GM12878 (cell line): ENCODE measurements at regions of chr6 and their contacts with region 1.

Region 1: GRCh38 chr6:1436334-1437306 is 47.2 kb downstream of the FOXF2 start:
- DNase-seq: peak; percentile 30
- ATAC-seq: peak; percentile 92
- H3K4me3 ChIP-seq: no peak overlapping the region
- H3K27ac ChIP-seq: no peak overlapping the region
- H3K4me1 ChIP-seq: no peaks in the 10 kb centered on the region
- H3K27me3 ChIP-seq: peaks cover 0 to 3% of the 10 kb centered on the region in 2 experiments; a peak in 3 of 4 replicates
- CTCF ChIP-seq: peak; percentile 57 to 82 (median 68); a peak in 5 of 6 replicates
- EP300 ChIP-seq: no peak
- POLR2A ChIP-seq: no peak
- RAD21 ChIP-seq: peak; percentile 78

Region 2: DNA sequence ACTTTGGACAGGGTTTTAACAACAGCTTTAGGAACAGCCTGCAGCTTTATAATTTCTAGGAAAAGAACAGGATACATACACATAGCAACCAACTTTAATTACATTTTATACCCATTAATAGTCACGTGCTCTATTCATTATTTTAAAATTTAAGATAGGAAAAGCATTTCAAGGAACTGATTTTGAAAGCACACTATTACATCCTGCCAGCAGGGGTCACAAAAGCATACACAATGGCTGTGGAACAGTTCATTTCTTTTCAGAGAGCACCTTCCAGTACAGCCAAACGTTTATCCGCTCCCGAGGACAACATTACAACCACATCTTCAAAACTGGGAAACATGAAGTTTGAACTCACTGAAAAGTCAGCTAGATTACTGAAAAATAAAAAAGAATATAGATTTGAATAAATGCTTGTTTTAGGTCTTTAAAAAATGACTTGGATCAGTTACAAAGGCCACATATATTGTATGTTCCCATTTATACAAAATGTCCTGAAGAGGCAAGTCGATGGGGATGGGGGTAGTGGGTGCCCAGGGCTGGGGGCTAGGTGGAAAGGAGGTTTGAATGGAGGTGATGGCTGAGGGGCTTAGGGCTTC is 639.0 kb before region 1 on chr6:
- CTCF ChIA-PET with region 1: interaction called, 12 read pairs
- POLR2A ChIA-PET with region 1: no interaction called
- RAD21 ChIA-PET with region 1: interaction called, 4 read pairs
- SMC1A ChIA-PET with region 1: interaction called, 10 read pairs
- in situ Hi-C with region 1: no loop called
- intact Hi-C with region 1: loop called (anchors 1 kb)
- DNase-seq: no peak
- ATAC-seq: peak; percentile 64
- H3K4me3 ChIP-seq: no peak overlapping the region
- H3K27ac ChIP-seq: no peak overlapping the region
- H3K4me1 ChIP-seq: no peaks in the 10 kb centered on the region
- H3K27me3 ChIP-seq: peaks cover 3 to 9% of the 10 kb centered on the region in 2 experiments
- CTCF ChIP-seq: peak; percentile 58 to 62 (median 59)
- EP300 ChIP-seq: no peak
- POLR2A ChIP-seq: no peak
- RAD21 ChIP-seq: peak; percentile 89

Region 3: DNA sequence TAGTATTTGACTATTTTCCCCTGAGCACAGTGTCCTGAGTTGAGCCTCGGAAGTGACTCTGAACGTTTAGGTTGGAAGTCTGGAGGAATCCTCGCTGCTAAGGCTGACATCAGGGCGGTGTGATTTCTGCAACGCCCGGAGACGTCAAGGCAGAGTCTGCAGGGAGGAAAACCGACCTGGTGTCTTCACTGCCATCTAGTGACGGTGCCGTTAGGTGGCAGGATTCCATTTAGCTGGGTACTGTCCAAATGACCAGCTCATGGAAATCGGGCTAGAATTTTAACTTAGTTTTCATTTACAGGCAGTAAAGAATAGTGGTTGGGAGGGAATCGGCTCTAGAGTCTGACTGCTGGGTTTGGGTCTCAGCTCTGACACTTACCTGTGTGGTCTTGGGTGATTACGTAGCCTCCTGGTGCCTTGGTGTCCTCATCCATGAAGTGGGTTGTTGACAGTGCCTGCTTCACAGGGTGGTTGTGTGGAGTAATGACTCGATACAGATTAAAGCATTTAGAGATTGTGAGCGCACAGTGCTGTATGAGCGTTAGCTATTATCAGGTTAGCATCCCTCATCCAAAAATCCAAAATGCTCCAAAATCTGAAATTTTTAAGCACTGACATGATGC is 12.2 kb before region 1 on chr6:
- CTCF ChIA-PET with region 1: interaction called, 41 read pairs
- POLR2A ChIA-PET with region 1: no interaction called
- RAD21 ChIA-PET with region 1: interaction called, 6 read pairs
- SMC1A ChIA-PET with region 1: interaction called, 14 read pairs
- in situ Hi-C with region 1: no loop called
- intact Hi-C with region 1: no loop called
- DNase-seq: no peak
- ATAC-seq: peak; percentile 90
- H3K4me3 ChIP-seq: no peak overlapping the region
- H3K27ac ChIP-seq: no peak overlapping the region
- H3K4me1 ChIP-seq: no peaks in the 10 kb centered on the region
- H3K27me3 ChIP-seq: peaks cover 0 to 2% of the 10 kb centered on the region in 2 experiments; a peak in 2 of 4 replicates
- CTCF ChIP-seq: peak; percentile 60 to 74 (median 73)
- EP300 ChIP-seq: no peak
- POLR2A ChIP-seq: no peak
- RAD21 ChIP-seq: peak; percentile 55